Upper lobe of right lung (tissue), 1 donor: ENCODE measurements at regions of chr1 and their contacts with region 1.

Region 1: DNA sequence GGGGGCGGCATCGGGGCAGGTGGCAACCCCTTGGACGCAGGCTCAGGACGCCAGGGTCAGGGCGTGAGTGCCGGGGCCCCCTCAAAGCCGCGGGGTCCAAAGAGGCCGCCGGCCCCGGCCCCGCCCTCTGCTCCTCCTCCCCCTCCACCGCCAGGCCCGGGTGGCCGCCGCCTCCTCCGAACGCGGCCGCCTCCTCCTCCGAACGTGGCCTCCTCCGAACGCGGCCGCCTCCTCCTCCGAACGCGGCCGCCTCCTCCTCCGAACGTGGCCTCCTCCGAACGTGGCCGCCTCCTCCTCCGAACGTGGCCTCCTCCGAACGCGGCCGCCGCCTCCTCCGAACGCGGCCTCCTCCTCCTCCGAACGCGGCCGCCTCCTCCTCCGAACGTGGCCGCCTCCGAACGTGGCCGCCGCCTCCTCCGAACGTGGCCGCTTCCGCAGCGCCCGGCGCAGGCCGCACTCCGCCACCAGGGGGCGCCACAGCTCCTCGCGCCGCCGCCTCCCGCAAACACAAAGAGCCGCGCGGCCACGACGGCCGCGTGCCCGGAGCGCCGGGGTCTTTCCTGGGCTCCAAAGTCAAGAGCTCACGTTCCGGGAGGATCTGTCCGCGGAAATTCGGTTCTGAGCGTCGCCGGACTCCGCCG is 19.3 kb upstream of the SAMD11 start:
- DNase-seq: peak; percentile 92
- ATAC-seq: peak; percentile 94
- H3K4me3 ChIP-seq: peak overlapping the region; percentile 45
- H3K27ac ChIP-seq: no peak overlapping the region
- H3K4me1 ChIP-seq: peaks cover 15% of the 10 kb centered on the region
- H3K27me3 ChIP-seq: peaks cover 9% of the 10 kb centered on the region
- CTCF ChIP-seq: peak; percentile 94

Region 2: GRCh38 chr1:960040-960756 is 55.8 kb after region 1 on chr1 and contains the start of gene KLHL17:
- intact Hi-C with region 1: loop called (anchors 10 kb)
- DNase-seq: peak; percentile 90
- ATAC-seq: peak; percentile 71
- H3K4me3 ChIP-seq: peak within 1 kb of the TSS; percentile 100
- H3K27ac ChIP-seq: no peak within 1 kb of the TSS
- H3K4me1 ChIP-seq: peaks cover 21% of the 10 kb centered on the region
- H3K27me3 ChIP-seq: no peaks in the 10 kb centered on the region
- CTCF ChIP-seq: no peak
- total RNA-seq, gene KLHL17: 17.0 TPM

Region 3: DNA sequence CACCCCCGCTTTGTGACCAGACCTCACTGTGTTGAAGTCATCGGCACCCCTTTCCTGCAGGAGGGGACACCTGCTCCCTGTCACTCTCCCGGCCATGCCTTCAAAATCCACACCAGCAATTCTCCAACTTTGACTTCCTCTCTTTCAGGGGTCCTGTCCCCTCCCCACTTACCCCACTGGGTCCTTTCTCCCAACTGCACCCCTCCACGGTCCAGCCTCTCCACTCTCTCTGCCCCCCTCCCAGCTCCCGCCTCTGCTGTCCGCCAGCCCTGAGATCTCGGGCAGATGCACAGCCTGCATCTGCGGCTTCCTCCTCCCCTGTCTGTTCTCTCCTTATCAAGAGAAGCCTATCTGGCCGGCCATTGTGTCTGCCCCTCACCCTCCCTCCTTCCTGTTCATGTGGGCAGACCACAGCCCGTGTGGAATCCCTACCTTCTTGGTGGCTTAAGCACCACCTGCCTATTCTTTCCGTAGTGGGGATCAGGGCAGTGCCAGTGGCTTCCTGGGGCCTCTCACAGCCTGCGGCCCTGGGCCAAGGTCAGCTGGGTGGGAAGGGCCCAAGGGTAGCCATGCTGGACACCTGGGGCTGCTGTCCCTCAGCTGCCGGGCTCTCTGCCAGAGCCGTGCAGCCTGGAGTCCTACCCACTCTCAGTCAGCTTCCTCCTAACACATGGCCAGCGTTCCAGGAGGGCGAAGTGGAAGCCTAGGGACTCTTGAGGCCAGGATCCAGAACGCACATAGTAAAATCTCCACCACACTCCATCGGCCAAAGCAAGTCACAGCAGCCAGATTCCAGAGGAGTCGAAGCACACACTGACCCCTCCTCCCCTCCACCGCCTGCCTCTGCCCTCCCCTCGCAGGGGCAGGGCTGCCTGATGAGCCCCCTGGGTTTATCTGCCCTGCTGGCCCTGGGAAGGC is 100.6 kb after region 1 on chr1:
- intact Hi-C with region 1: no loop called
- DNase-seq: peak; percentile 81
- ATAC-seq: peak; percentile 66
- H3K4me3 ChIP-seq: no peak overlapping the region
- H3K27ac ChIP-seq: no peak overlapping the region
- H3K4me1 ChIP-seq: peaks cover 17% of the 10 kb centered on the region
- H3K27me3 ChIP-seq: peaks cover 8% of the 10 kb centered on the region
- CTCF ChIP-seq: no peak